ENCODE measurements at regions of chr22 and their contacts with region 1.

Region 1: GRCh38 chr22:22767876-22768602 is 119.6 kb upstream of the IGLL5 start:
- DNase-seq: no peak
- ATAC-seq: no peak
- H3K4me3 ChIP-seq: no peak overlapping the region
- H3K27ac ChIP-seq: no peak overlapping the region
- H3K4me1 ChIP-seq: no peaks in the 10 kb centered on the region
- H3K27me3 ChIP-seq: no peaks in the 10 kb centered on the region

Region 2: DNA sequence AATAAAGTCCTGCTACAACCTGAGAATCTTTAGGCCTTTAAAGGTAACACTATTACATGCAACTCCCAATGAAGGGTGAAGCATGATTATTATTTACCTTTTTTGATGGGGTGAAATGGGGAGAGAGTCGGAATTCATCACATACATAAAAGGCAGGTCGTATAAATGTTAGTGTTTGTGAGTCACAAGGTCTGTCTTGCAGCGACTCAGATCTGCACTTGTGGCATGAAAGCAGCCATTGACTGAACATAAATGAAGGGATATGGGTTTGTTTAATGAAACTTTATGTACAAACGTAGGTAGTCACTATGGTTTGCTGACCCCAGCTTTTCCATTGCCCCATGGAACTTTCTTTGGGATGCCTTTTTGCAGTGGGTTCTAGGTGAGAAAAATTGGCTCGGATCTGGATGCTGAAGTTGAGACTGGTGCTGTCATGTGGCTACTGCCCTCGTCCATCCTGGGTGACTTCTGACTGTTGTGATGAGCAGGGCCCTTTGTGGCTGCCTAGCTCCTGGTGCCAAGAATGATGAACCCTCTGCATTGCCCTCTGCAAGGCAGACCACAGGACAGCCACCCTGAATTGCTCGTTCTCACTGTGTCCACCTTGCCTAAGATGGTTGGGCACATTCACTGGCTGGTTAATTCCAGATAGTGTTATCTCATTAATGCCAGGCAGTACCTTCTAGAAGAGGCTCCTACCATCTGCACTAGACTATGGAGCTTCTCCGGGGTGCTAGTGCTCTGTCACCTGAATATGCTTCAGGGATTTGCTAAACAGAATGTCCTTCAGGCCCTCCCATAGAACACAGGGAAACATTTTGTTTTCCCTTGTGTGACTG is 112.4 kb before region 1 on chr22:
- intact Hi-C with region 1: no loop called
- DNase-seq: no peak
- ATAC-seq: no peak
- H3K4me3 ChIP-seq: no peak overlapping the region
- H3K27ac ChIP-seq: no peak overlapping the region
- H3K4me1 ChIP-seq: no peaks in the 10 kb centered on the region
- H3K27me3 ChIP-seq: no peaks in the 10 kb centered on the region

Region 3: GRCh38 chr22:22698263-22698750 is 69.7 kb before region 1 on chr22:
- intact Hi-C with region 1: no loop called
- DNase-seq: no peak
- ATAC-seq: no peak
- H3K4me3 ChIP-seq: no peak overlapping the region
- H3K27ac ChIP-seq: no peak overlapping the region
- H3K4me1 ChIP-seq: no peaks in the 10 kb centered on the region
- H3K27me3 ChIP-seq: no peaks in the 10 kb centered on the region

Region 4: DNA sequence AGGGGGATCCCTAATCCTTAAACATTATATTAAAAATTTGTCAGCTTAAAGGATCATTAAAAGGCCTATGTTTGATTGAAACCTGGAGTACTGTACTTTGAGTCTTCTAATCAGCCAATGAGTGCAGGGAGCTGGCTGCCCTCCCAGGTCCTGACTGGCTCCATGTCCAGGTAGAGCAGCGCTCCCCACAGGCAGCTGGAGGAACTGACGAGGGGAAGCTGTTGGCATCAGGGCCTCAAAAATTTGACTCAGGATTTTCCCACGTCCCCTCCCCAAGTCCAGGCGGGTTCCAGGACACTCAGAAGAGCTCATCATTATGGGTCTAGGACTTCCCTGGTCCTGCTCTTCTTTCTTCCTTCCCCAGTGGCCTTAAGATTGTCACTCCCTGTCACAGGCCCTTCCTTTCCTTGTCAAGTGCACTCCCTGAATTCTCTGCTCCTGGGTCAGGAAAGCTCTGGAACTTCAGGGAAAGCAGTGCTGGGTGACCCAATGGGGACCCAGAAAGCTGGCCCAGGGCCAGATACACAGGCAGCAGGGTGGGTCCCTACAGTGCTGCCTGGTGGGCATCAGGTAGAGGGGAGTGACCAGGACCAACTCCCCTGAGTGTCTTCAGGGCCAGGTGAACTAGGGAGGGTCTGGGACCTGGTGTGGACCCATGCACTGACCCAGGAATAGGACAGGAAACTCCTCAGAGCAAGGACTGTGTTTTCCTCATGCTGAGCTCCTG is 58.2 kb before region 1 on chr22:
- intact Hi-C with region 1: loop called in 1 of 4 experiments (anchors 5 kb)
- DNase-seq: no peak
- ATAC-seq: peak in 1 of 2 donors; percentile 34
- H3K4me3 ChIP-seq: no peak overlapping the region
- H3K27ac ChIP-seq: no peak overlapping the region
- H3K4me1 ChIP-seq: no peaks in the 10 kb centered on the region
- H3K27me3 ChIP-seq: no peaks in the 10 kb centered on the region

Measured in right cardiac atrium (tissue), 5 donors.